Psoas muscle (tissue), 8 donors: ENCODE measurements at regions of chr9 and their contacts with region 1.

Region 1: DNA sequence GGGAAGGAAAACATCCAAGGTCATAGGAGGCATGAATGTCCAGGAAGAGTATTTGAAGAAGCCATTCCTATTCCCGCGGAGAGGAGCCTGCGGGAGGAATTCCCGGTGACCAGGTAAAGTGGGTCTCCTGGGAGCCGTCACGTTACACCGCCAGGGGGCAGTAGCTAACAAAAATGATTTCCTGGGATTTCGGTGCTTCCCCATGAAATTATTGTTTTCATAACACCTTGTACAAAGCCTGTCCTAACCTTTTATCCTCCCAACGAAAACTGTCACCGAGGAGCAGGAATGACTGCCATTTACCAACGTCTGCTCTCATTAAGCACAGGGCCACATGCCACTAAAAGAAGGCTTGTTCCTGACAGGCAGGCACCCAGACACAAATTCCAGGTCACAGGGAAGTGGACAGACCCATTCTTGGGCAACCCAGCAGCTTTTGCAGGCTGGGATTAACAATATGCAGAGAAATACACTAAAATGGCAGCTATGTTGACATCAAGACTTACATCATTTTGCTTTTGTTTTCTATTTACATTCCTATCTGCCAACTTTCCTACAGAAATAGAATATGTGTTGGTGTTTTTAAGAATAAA is 41.2 kb upstream of the CTSL start:
- DNase-seq: peak; percentile 40 to 56
- ATAC-seq: peak in 3 of 4 donors; percentile 38 to 61 (median 49)
- H3K4me3 ChIP-seq: no peak overlapping the region
- H3K27ac ChIP-seq: no peak overlapping the region
- H3K4me1 ChIP-seq: no peaks in the 10 kb centered on the region
- H3K27me3 ChIP-seq: no peaks in the 10 kb centered on the region
- CTCF ChIP-seq: peak; percentile 62

Region 2: GRCh38 chr9:87184956-87185642 is 499.6 kb before region 1 on chr9:
- intact Hi-C with region 1: no loop called
- DNase-seq: no peak
- ATAC-seq: no peak
- H3K4me3 ChIP-seq: no peak overlapping the region
- H3K27ac ChIP-seq: no peak overlapping the region
- H3K4me1 ChIP-seq: no peaks in the 10 kb centered on the region
- H3K27me3 ChIP-seq: no peaks in the 10 kb centered on the region
- CTCF ChIP-seq: no peak

Region 3: GRCh38 chr9:87635656-87636501 is 48.8 kb before region 1 on chr9:
- intact Hi-C with region 1: no loop called
- DNase-seq: no peak
- ATAC-seq: no peak
- H3K4me3 ChIP-seq: no peak overlapping the region
- H3K27ac ChIP-seq: no peak overlapping the region
- H3K4me1 ChIP-seq: no peaks in the 10 kb centered on the region
- H3K27me3 ChIP-seq: no peaks in the 10 kb centered on the region
- CTCF ChIP-seq: no peak

Region 4: GRCh38 chr9:87725900-87726709 is 41.4 kb after region 1 on chr9 and contains the start of gene CTSL:
- intact Hi-C with region 1: loop called in 1 of 2 experiments (anchors 5 kb)
- DNase-seq: peak; percentile 94 to 97
- ATAC-seq: peak; percentile 93 to 96 (median 95)
- H3K4me3 ChIP-seq: peak within 1 kb of the TSS; percentile 92
- H3K27ac ChIP-seq: peak within 1 kb of the TSS; percentile 96
- H3K4me1 ChIP-seq: peaks cover 20% of the 10 kb centered on the region
- H3K27me3 ChIP-seq: no peaks in the 10 kb centered on the region
- CTCF ChIP-seq: no peak
- total RNA-seq, gene CTSL: 45.8 to 93.6 (median 73.8) TPM

Region 5: GRCh38 chr9:87812375-87813118 is 127.8 kb after region 1 on chr9:
- intact Hi-C with region 1: loop called (anchors 5 kb)
- DNase-seq: no peak
- ATAC-seq: peak in 1 of 4 donors; percentile 32
- H3K4me3 ChIP-seq: no peak overlapping the region
- H3K27ac ChIP-seq: no peak overlapping the region
- H3K4me1 ChIP-seq: no peaks in the 10 kb centered on the region
- H3K27me3 ChIP-seq: peaks cover 0 to 12% (median 4%) of the 10 kb centered on the region in 3 donors
- CTCF ChIP-seq: peak; percentile 75

Region 6: DNA sequence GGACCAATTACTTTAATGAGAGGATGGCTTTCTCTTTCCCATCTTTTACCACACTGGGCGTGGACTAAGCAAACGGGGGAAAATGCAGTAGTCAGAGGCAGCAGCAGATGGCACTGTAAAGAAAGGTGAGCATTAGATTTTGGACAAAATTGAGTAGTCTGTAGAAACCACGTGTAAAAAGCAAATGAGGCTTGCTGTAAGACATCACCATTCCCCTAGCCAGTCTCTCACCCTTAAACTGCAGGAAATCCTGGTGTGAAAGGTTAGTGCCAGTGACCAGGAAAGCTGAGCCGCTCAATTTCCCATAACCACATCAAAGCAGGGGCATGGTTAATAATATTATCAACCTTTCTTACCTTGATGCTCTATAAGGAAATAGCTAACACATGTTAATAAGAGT is 421.8 kb after region 1 on chr9:
- intact Hi-C with region 1: no loop called
- DNase-seq: no peak
- ATAC-seq: no peak
- H3K4me3 ChIP-seq: no peak overlapping the region
- H3K27ac ChIP-seq: no peak overlapping the region
- H3K4me1 ChIP-seq: no peaks in the 10 kb centered on the region
- H3K27me3 ChIP-seq: peaks cover 0 to 3% (median 1%) of the 10 kb centered on the region in 3 donors
- CTCF ChIP-seq: peak; percentile 22